ENCODE measurements at regions of chr2 and their contacts with region 1.

Region 1: GRCh38 chr2:218892693-218893348 is 12.2 kb downstream of the WNT10A start:
- DNase-seq: peak; percentile 87

Region 2: DNA sequence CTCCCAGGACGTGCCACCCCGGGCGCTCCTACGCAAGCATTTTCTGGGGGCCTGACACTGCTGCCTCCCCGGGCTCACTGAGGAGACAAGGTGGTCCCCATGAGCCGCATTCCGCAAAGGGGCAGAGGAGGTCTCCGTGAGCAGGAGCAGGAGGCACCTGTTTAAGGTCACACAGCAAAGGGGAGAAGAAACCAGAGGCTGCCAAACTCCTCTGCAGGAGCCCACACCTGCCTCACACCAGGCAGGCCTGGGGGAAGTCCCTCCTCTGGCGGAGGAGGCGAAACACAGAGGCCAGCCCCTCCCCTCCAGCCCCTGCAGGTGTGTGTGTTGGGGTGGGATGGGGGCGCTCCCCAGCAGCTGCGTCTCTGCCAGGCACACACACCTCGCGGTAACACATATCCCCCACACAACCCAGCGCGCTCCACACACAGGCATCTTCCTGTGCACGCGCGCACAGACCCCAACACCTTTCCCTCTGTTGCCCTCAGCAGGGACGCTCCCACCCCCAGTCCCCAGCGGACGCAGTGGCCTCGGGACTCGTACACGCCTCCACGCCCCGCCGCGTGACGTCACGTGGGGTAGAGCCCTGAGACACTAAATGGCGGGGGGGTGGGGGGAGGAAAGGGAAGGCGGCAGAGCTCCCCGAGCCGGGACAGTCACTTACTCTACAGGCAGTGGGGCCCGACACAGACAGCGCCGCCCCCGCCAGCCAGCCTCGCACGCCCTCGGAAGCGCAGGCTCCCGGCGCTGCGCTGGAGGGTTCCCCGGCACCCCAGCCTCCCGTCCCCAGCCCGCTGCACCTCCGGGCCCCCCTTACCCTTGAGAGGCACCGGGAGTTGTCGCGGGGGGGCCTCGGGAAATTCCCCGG is 12.7 kb before region 1 on chr2:
- intact Hi-C with region 1: loop called in 1 of 2 experiments (anchors 1 kb)
- DNase-seq: peak; percentile 81

Region 3: GRCh38 chr2:219912491-219912921 is 1019.7 kb after region 1 on chr2:
- intact Hi-C with region 1: no loop called
- DNase-seq: no peak